ENCODE measurements at regions of chr3 and their contacts with region 1.

Region 1: GRCh38 chr3:185959609-185960517 is 22.0 kb upstream of the TRA2B start:
- DNase-seq: peak; percentile 74 to 91
- H3K4me3 ChIP-seq: peak overlapping the region; percentile 77
- H3K27ac ChIP-seq: peak overlapping the region; percentile 96
- H3K4me1 ChIP-seq: peaks cover 49% of the 10 kb centered on the region
- H3K27me3 ChIP-seq: no peaks in the 10 kb centered on the region
- CTCF ChIP-seq: peak; percentile 11; the same call in 1 of the 2 replicates

Region 2: DNA sequence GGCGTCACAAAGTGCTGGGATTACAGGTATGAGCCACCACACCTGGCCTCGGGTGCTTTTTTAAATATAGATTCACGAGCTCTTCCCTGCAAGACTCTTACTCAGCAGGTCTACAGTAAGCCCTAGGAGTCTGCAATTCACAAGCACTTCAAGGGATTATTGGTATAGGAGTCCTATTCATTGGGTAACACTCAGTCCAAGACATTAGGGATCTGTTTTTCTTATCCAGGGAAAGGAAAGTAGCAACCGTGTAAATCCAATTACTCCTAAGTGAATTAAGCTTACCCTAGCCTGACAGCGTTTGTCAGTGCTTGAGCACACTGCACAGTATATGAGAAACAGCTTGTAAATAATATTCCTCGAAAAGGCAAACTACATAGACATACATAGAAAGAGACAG is 263.8 kb before region 1 on chr3:
- CTCF ChIA-PET with region 1: no interaction called
- POLR2A ChIA-PET with region 1: interaction called, 20 read pairs
- intact Hi-C with region 1: no loop called
- DNase-seq: no peak
- H3K4me3 ChIP-seq: no peak overlapping the region
- H3K27ac ChIP-seq: no peak overlapping the region
- H3K4me1 ChIP-seq: peaks cover 3% of the 10 kb centered on the region; the same call in 1 of the 2 replicates
- H3K27me3 ChIP-seq: no peaks in the 10 kb centered on the region
- CTCF ChIP-seq: no peak

Region 3: DNA sequence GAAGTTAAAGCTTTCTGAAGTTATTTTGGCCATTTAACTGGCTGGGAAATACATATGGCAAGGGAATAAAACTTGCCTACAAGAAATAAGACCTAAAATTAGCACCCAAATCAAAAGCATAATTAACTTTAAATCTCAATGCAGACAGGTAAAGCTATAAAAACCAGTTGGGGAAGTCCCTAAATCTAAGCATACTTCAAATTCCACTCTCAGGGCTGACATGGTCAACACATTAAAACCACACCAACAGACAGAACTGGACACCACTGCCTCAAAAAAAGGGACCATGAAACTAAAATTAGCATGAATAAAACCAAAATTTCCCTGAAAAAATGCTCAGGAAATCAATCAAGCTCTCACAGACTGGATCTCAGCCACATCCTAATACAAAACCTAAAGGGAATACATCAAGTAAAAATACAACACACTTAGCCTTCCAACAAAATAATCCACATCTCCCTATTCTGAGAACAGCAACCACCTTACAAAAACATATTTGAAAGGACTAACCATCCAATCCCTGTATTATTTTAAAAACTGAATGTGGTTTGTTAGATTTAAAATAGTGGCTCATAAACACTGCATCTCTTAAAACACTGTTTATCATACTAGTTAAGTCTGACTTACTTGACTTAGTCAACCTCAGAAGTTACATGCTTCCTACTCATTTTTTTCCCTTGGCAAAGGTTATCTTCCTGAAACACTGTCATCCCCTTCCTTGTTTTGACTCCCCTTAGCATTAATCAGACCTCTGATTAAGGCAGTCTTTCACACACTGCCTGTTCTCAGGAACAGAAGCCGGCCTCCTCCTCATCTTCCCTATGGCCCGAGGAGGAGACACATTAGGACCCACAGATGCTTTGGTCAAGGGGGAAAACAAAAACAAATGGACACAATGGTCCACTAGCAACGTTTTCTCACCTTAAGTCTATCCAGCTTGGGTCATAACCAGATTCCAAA is 30.4 kb before region 1 on chr3:
- CTCF ChIA-PET with region 1: interaction called, 12 read pairs
- POLR2A ChIA-PET with region 1: interaction called, 6 read pairs
- intact Hi-C with region 1: no loop called
- DNase-seq: peak in 1 of 2 experiments; percentile 74
- H3K4me3 ChIP-seq: peak overlapping the region; percentile 2; the same call in 1 of the 2 replicates
- H3K27ac ChIP-seq: peak overlapping the region; percentile 30
- H3K4me1 ChIP-seq: peaks cover 74% of the 10 kb centered on the region
- H3K27me3 ChIP-seq: no peaks in the 10 kb centered on the region
- CTCF ChIP-seq: no peak

Region 4: GRCh38 chr3:185942907-185943759 is 16.7 kb before region 1 on chr3:
- CTCF ChIA-PET with region 1: interaction called, 45 read pairs
- POLR2A ChIA-PET with region 1: interaction called, 8 read pairs
- intact Hi-C with region 1: loop called (anchors 1 kb)
- DNase-seq: peak; percentile 86 to 93
- H3K4me3 ChIP-seq: no peak overlapping the region; the same call in 1 of the 2 replicates
- H3K27ac ChIP-seq: no peak overlapping the region
- H3K4me1 ChIP-seq: peaks cover 48% of the 10 kb centered on the region
- H3K27me3 ChIP-seq: no peaks in the 10 kb centered on the region
- CTCF ChIP-seq: peak; percentile 100

Region 5: DNA sequence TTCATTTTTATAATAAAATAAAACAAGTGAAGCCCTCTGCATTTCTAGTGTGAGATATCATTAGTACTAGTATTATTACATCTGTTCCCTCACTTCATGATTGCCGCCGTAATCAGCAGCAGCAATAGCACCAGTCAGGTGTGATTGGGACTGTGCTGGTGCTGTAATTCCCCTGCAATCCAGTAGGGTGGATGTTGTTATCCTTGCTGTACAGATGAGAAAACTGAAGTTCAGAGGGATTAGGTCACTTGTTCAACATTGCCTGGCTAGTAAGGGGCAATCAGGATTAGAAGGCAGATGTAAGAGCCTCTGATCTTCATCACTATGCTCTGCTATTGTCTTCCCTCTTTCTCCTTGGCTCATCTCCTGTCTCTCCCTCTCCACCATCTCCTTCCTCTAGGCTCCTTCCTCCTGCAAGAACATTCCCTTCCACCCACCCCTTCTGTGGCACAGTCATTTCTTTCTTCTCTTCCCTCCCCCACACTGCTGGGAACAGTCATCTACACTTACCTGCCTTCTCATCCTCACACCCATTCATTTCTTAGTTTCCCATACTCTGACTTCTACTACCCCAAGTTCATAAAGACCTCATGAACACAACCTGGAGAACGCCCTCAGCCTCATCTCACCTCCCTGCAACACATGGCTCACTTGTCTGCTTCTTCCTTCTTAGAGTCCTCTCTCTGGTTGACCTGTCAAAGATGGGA is 554.6 kb after region 1 on chr3:
- CTCF ChIA-PET with region 1: no interaction called
- POLR2A ChIA-PET with region 1: no interaction called
- intact Hi-C with region 1: no loop called
- DNase-seq: no peak
- H3K4me3 ChIP-seq: no peak overlapping the region
- H3K27ac ChIP-seq: no peak overlapping the region
- H3K4me1 ChIP-seq: no peaks in the 10 kb centered on the region
- H3K27me3 ChIP-seq: peaks cover 100% of the 10 kb centered on the region
- CTCF ChIP-seq: peak; percentile 69

Region 6: DNA sequence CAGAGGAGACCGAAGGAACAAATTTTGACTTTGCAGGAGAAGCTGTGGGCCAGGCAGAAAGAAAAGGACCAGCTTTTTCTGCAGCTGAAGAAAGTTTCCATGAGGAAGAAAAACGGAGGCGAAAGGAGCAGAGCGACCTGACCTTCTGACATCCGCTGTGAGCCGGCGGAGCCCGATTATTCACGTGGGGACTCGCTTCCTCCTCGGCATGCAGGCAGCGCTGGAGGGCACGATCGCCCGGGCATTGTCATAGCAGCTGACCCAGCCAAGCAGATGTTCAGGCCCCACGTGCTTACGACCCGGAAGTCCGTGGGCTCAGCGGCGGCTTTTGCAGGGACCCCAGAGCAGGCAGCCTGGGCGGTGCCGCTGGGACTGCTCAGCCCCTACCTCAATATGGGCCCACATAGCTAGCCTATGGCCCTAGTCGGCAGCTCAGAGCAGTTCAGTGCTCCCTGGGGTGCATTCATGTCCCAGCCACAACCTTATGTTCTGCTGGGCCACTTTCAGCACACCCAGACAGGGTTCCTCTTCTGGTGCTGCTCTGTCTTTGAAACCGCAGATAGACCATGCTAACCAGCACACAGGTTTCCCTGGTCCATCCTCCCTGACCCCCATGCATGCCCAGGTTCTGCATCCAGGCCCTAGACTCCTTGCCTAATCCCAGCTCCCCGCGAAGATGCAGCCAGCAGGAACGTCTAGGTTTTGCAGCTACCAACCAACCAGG is 813.0 kb after region 1 on chr3:
- CTCF ChIA-PET with region 1: no interaction called
- POLR2A ChIA-PET with region 1: interaction called, 29 read pairs
- intact Hi-C with region 1: no loop called
- DNase-seq: no peak
- H3K4me3 ChIP-seq: no peak overlapping the region
- H3K27ac ChIP-seq: no peak overlapping the region
- H3K4me1 ChIP-seq: no peaks in the 10 kb centered on the region
- H3K27me3 ChIP-seq: no peaks in the 10 kb centered on the region
- CTCF ChIP-seq: no peak

Measured in PC-9 (cell line).